Activated naive CD4-positive, alpha-beta T cell treated with anti-CD3 and anti-CD28 coated beads, Interleukin-2, amount 10 ng/mL, durations not matched to agents 7 days and 5 days (primary cell): ENCODE measurements at regions of chr11 and their contacts with region 1.

Region 1: GRCh38 chr11:94897330-94897768 is 76.0 kb downstream of the CWC15 start:
- DNase-seq: peak; percentile 57
- H3K4me3 Mint-ChIP-seq: no peak overlapping the region
- H3K27ac Mint-ChIP-seq: no peak overlapping the region
- H3K4me1 Mint-ChIP-seq: no peaks in the 10 kb centered on the region
- H3K27me3 Mint-ChIP-seq: peaks cover 11% of the 10 kb centered on the region

Region 2: GRCh38 chr11:94786264-94787126 is 110.9 kb before region 1 on chr11:
- CTCF ChIA-PET with region 1: interaction called, 25 read pairs
- DNase-seq: no peak
- H3K4me3 Mint-ChIP-seq: no peak overlapping the region
- H3K27ac Mint-ChIP-seq: no peak overlapping the region
- H3K4me1 Mint-ChIP-seq: peaks cover 5% of the 10 kb centered on the region
- H3K27me3 Mint-ChIP-seq: peaks cover 10% of the 10 kb centered on the region